ENCODE measurements at regions of chr1 and their contacts with region 1.

Region 1: GRCh38 chr1:246078126-246078887 is 428.8 kb downstream of the SMYD3 start:
- DNase-seq: peak in 2 of 4 experiments; percentile 21 to 39
- ATAC-seq: peak; percentile 67
- H3K4me3 ChIP-seq: no peak overlapping the region
- H3K27ac ChIP-seq: peak overlapping the region; percentile 58
- H3K4me1 ChIP-seq: peaks cover 0 to 25% of the 10 kb centered on the region in 2 experiments; a peak in 3 of 5 replicates
- H3K27me3 ChIP-seq: no peaks in the 10 kb centered on the region
- CTCF ChIP-seq: no peak
- EP300 ChIP-seq: peak; percentile 29; the same call in 1 of the 2 replicates
- POLR2A ChIP-seq: no peak
- RAD21 ChIP-seq: no peak

Region 2: DNA sequence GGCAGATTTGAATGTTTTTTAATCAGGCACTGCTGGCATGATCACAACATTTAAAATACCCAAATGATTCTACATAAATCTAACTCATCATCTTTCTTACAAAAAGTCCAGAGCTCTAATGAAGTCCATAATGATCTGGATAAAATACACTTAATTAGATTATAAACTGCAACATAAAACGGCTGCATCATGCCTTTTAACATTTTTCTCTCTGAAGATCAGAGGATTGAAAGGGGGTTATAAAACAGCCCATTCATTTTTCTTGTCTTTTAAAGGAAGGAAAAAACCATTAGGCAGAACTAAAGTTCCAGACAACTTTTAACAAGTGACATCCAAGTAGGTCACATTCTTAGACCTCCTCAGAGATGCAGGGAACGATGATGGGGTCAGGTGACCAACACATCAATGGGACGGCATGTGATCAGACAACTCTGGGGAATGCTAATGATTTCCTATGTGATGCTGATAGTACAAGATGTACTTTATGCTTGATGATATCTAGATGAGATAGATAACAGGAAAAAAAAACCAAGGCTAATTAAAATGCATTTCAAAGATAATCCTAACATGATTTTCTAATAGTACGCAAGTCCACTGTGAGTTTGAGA is 26.3 kb before region 1 on chr1:
- CTCF ChIA-PET with region 1: no interaction called
- POLR2A ChIA-PET with region 1: no interaction called
- in situ Hi-C with region 1: no loop called
- intact Hi-C with region 1: no loop called
- DNase-seq: no peak
- ATAC-seq: no peak
- H3K4me3 ChIP-seq: no peak overlapping the region
- H3K27ac ChIP-seq: no peak overlapping the region
- H3K4me1 ChIP-seq: no peaks in the 10 kb centered on the region
- H3K27me3 ChIP-seq: no peaks in the 10 kb centered on the region
- CTCF ChIP-seq: no peak
- EP300 ChIP-seq: no peak
- POLR2A ChIP-seq: no peak
- RAD21 ChIP-seq: no peak

Region 3: DNA sequence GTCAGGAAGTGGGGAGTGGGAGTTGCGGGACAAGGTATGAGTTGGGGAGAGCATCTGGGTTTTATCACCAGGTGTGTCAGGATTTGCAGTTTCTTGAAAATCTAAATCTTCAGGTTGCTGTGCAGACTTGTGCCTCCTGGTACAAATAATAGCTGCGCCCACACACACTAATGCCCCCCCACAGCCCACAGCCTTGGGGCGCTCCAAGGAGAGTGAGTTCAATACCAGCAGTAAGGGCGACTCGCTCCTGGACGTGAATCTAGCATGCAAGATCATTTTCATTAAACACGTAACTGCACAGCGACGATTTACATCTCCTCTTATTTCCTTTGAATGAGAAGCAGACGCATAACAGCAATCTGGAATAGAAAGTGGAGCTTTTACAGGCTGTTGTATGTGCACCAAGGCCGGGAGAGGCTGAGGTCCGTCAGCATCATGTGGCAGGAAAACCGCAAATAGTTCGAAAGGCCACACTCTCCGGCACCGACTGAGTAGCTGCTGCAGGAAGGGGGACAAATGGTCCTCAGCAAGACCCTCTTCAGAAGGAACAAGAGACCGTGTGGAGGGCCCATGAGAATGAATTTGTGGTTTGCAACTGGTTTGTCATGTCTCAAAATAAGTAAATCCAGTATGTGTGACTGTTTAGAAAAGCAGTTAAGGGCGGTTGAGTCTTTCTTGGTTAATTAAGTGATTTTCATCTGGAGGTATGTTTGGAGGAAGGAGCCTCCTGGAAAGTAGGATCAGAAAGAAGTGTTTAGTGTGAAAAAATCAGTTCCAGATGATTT is 10.7 kb before region 1 on chr1:
- CTCF ChIA-PET with region 1: no interaction called
- POLR2A ChIA-PET with region 1: interaction called, 11 read pairs
- in situ Hi-C with region 1: no loop called
- intact Hi-C with region 1: no loop called
- DNase-seq: no peak
- ATAC-seq: no peak
- H3K4me3 ChIP-seq: no peak overlapping the region
- H3K27ac ChIP-seq: no peak overlapping the region
- H3K4me1 ChIP-seq: peaks cover 4 to 34% of the 10 kb centered on the region in 2 experiments; a peak in 4 of 5 replicates
- H3K27me3 ChIP-seq: no peaks in the 10 kb centered on the region
- CTCF ChIP-seq: no peak
- EP300 ChIP-seq: no peak
- POLR2A ChIP-seq: no peak
- RAD21 ChIP-seq: no peak

Region 4: DNA sequence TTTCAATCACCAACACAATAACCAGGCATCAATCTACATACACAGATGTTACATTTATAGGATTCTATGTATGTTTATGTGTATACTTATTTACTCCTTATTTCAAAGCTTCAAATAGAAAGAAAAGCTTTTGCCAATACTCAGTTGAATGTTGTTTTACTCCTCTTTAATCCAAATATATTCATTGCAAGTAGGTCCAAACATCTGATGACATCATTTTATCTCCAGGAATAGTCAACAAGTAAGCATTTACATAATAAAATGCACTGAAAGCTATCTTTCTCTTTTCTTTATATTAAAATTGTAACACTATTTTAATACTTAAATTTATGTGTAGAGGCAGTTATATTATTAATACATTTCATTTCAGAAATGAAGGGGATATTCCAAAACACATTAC is 48.3 kb after region 1 on chr1:
- CTCF ChIA-PET with region 1: no interaction called
- POLR2A ChIA-PET with region 1: no interaction called
- in situ Hi-C with region 1: no loop called
- intact Hi-C with region 1: no loop called
- DNase-seq: no peak
- ATAC-seq: no peak
- H3K4me3 ChIP-seq: no peak overlapping the region
- H3K27ac ChIP-seq: no peak overlapping the region
- H3K4me1 ChIP-seq: no peaks in the 10 kb centered on the region; a peak in 1 of 5 replicates
- H3K27me3 ChIP-seq: no peaks in the 10 kb centered on the region
- CTCF ChIP-seq: no peak
- EP300 ChIP-seq: no peak
- POLR2A ChIP-seq: no peak
- RAD21 ChIP-seq: no peak